ENCODE measurements at regions of chr10 and their contacts with region 1.

Region 1: GRCh38 chr10:100346765-100347567 is at the start of gene SCD:
- DNase-seq: peak; percentile 97
- H3K27ac ChIP-seq: peak within 1 kb of the TSS; percentile 92
- CTCF ChIP-seq: no peak

Region 2: GRCh38 chr10:100373298-100374136 is 26.6 kb after region 1 on chr10:
- CTCF ChIA-PET with region 1: interaction called, 4 read pairs
- POLR2A ChIA-PET with region 1: interaction called, 54 read pairs
- DNase-seq: peak; percentile 100
- H3K27ac ChIP-seq: peak overlapping the region; percentile 100
- CTCF ChIP-seq: no peak